Activated CD4-positive, alpha-beta memory T cell treated with anti-CD3 and anti-CD28 coated beads for 36 hours (primary cell): ENCODE measurements at regions of chr12 and their contacts with region 1.

Region 1: GRCh38 chr12:108950991-108951739 is 69.7 kb downstream of the SVOP start:
- DNase-seq: peak; percentile 80
- H3K4me3 Mint-ChIP-seq: no peak overlapping the region
- H3K27ac Mint-ChIP-seq: no peak overlapping the region
- H3K4me1 Mint-ChIP-seq: peaks cover 2% of the 10 kb centered on the region
- H3K27me3 Mint-ChIP-seq: peaks cover 6% of the 10 kb centered on the region

Region 2: GRCh38 chr12:108562348-108563135 is 388.6 kb before region 1 on chr12 and contains the start of gene ISCU:
- CTCF ChIA-PET with region 1: interaction called, 7 read pairs
- POLR2A ChIA-PET with region 1: no interaction called
- intact Hi-C with region 1: loop called (anchors 2 kb)
- DNase-seq: peak; percentile 99
- H3K4me3 Mint-ChIP-seq: peak within 1 kb of the TSS; percentile 100
- H3K27ac Mint-ChIP-seq: peak within 1 kb of the TSS; percentile 99
- H3K4me1 Mint-ChIP-seq: peaks cover 57% of the 10 kb centered on the region
- H3K27me3 Mint-ChIP-seq: no peaks in the 10 kb centered on the region
- total RNA-seq, gene ISCU: 88.6 to 94.3 TPM

Region 3: DNA sequence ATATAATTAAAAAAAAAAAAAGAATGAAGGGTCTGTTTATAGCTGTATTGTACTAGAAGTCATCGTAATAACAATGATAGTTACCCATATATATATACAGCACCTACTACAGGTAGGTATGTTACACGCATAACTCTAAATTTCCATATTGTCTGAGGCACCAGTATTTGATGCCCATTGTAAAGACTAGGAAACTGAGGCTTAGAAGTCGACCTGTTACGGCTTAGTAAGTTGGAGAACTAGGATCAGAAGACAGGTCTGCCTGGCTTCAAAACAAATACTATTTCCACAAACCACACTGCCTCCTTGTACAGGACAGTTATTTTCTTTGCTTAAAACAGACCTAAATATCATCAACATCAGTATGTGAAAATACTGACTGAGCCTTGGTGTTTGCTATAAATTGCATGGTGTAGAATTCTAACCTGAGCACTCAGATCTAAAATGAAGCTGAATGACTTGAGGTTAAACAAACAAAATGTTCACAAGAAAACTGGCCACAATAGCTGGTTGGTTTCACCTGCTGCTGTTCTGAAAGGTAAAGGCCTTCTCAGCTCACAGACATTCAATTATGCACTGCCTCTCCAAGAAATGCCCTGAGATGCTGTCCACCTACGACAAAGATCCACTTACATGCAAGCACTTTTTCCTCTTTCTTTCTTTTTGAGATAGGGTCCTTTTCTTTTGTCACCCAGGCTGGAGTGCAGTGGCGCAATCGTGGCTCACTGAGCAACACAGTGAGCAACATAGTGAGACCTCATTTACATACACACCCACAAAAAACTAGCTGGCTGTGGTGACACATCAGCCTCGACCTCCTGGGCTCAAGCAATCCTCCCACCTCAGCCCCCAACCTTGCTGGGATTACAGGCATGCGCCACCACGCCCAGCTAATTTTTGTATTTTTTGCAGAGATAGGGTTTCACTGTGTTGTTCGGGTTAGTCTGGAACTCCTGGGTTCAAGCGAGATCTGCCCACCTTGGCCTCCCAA is 129.5 kb before region 1 on chr12:
- CTCF ChIA-PET with region 1: interaction called, 4 read pairs
- POLR2A ChIA-PET with region 1: no interaction called
- intact Hi-C with region 1: loop called (anchors 5 kb)
- DNase-seq: peak; percentile 60
- H3K4me3 Mint-ChIP-seq: no peak overlapping the region
- H3K27ac Mint-ChIP-seq: peak overlapping the region; percentile 47
- H3K4me1 Mint-ChIP-seq: peaks cover 29% of the 10 kb centered on the region
- H3K27me3 Mint-ChIP-seq: no peaks in the 10 kb centered on the region

Region 4: GRCh38 chr12:108884116-108885012 is 66.8 kb before region 1 on chr12:
- CTCF ChIA-PET with region 1: interaction called, 32 read pairs
- POLR2A ChIA-PET with region 1: no interaction called
- intact Hi-C with region 1: loop called (anchors 1 kb)
- DNase-seq: peak; percentile 80
- H3K4me3 Mint-ChIP-seq: no peak overlapping the region
- H3K27ac Mint-ChIP-seq: no peak overlapping the region
- H3K4me1 Mint-ChIP-seq: peaks cover 2% of the 10 kb centered on the region
- H3K27me3 Mint-ChIP-seq: no peaks in the 10 kb centered on the region

Region 5: GRCh38 chr12:108930756-108931155 is 20.4 kb before region 1 on chr12:
- CTCF ChIA-PET with region 1: interaction called, 11 read pairs
- POLR2A ChIA-PET with region 1: no interaction called
- intact Hi-C with region 1: no loop called
- DNase-seq: no peak
- H3K4me3 Mint-ChIP-seq: no peak overlapping the region
- H3K27ac Mint-ChIP-seq: no peak overlapping the region
- H3K4me1 Mint-ChIP-seq: no peaks in the 10 kb centered on the region
- H3K27me3 Mint-ChIP-seq: peaks cover 2% of the 10 kb centered on the region